ENCODE measurements at regions of chr2 and their contacts with region 1.

Region 1: GRCh38 chr2:161273038-161273760 is 35.0 kb upstream of the PSMD14 start:
- DNase-seq: peak; percentile 78
- H3K4me3 ChIP-seq: no peak overlapping the region
- H3K27ac ChIP-seq: no peak overlapping the region
- H3K4me1 ChIP-seq: no peaks in the 10 kb centered on the region
- CTCF ChIP-seq: peak; percentile 96

Region 2: GRCh38 chr2:161223139-161223732 is 50.0 kb before region 1 on chr2:
- CTCF ChIA-PET with region 1: interaction called, 5 read pairs
- POLR2A ChIA-PET with region 1: interaction called, 6 read pairs
- intact Hi-C with region 1: loop called (anchors 1 kb)
- DNase-seq: peak; percentile 52
- H3K4me3 ChIP-seq: no peak overlapping the region
- H3K27ac ChIP-seq: no peak overlapping the region
- H3K4me1 ChIP-seq: peaks cover 6% of the 10 kb centered on the region
- CTCF ChIP-seq: peak; percentile 90

Region 3: GRCh38 chr2:161250864-161251436 is 22.2 kb before region 1 on chr2:
- CTCF ChIA-PET with region 1: no interaction called
- POLR2A ChIA-PET with region 1: interaction called, 4 read pairs
- intact Hi-C with region 1: loop called (anchors 2 kb)
- DNase-seq: peak; percentile 70
- H3K4me3 ChIP-seq: no peak overlapping the region
- H3K27ac ChIP-seq: no peak overlapping the region
- H3K4me1 ChIP-seq: peaks cover 15% of the 10 kb centered on the region
- CTCF ChIP-seq: peak; percentile 89

Measured in OCI-LY7 (cell line).